ENCODE measurements at regions of chr3 and their contacts with region 1.

Region 1: GRCh38 chr3:44761424-44762169 is at the starts of genes KIAA1143 and KIF15:
- DNase-seq: peak; percentile 92 to 99 (median 98)
- ATAC-seq: peak; percentile 97
- H3K4me3 ChIP-seq: peak within 1 kb of the TSS; percentile 74 to 77
- H3K4me3 Mint-ChIP-seq: peak within 1 kb of the TSS; percentile 93
- H3K27ac ChIP-seq: peak within 1 kb of the TSS; percentile 78 to 81
- H3K27ac Mint-ChIP-seq: peak within 1 kb of the TSS; percentile 92
- H3K4me1 ChIP-seq: peaks cover 9% of the 10 kb centered on the region
- H3K4me1 Mint-ChIP-seq: peaks cover 40% of the 10 kb centered on the region
- H3K27me3 ChIP-seq: no peaks in the 10 kb centered on the region
- H3K27me3 Mint-ChIP-seq: peaks cover 3% of the 10 kb centered on the region
- CTCF ChIP-seq: no peak
- total RNA-seq, gene KIAA1143: 29.7 to 30.3 TPM
- total RNA-seq, gene KIF15: 0.24 to 0.64 TPM

Region 2: DNA sequence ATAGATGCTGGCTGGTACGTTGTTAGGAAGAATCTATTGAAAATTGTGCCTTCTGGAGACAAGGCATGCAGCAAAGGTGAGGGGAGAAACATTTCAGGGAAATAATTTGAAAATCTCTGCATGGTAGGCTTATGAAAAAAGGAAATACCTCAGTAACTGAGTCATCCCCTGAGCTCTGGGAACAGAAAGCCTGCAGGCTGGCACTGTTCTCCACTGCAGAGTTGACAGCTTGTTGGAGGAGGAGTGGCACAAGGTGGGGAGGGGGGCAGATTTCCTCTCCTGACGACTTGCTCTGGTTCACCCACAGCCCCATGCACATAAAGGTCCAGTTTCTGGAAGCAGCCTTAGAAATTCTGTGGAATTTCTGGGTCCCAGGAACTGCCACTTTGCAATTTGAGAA is 891.5 kb before region 1 on chr3:
- CTCF ChIA-PET with region 1: no interaction called
- POLR2A ChIA-PET with region 1: no interaction called
- intact Hi-C with region 1: no loop called
- DNase-seq: no peak
- ATAC-seq: no peak
- H3K4me3 ChIP-seq: no peak overlapping the region
- H3K4me3 Mint-ChIP-seq: no peak overlapping the region
- H3K27ac ChIP-seq: no peak overlapping the region
- H3K27ac Mint-ChIP-seq: no peak overlapping the region
- H3K4me1 ChIP-seq: no peaks in the 10 kb centered on the region
- H3K4me1 Mint-ChIP-seq: no peaks in the 10 kb centered on the region
- H3K27me3 ChIP-seq: no peaks in the 10 kb centered on the region
- H3K27me3 Mint-ChIP-seq: peaks cover 25% of the 10 kb centered on the region
- CTCF ChIP-seq: no peak

Region 3: DNA sequence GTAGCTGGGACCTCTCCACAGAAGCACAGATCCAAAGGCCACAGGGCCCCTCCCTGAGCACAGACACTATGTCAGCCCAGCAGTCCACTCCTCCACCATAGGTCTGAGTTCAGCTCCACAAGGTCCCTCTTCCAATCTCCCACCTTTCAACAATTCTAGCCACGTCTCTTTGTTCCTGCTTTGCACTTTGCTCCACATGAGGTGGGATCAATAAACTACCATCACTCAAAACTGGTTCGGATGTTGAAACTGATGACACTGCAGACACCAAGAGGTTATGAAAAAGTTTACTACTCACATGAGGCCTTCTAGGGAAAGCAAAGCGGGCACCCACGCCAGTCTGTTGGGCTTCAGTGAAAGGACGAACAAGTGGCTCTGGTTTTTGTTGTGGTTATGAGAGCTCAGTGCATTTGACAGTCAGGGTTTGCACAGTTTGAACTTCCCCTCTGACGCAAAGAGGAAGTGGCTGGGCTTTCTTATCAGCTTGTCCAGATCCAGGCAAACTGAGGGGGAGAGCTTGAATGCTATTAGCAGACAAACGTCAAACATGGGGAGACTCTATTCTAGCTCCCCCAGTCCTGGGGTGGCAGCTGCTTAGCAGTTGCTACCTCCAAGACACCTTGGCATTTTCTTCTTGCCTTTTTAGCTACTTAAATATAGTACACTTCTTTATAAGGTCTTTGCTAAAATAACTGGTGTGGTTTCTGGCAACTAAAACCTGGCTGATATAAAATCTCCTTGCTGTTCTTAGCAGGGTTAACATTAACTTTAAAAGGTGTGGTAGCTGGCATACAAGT is 321.9 kb before region 1 on chr3:
- CTCF ChIA-PET with region 1: no interaction called
- POLR2A ChIA-PET with region 1: no interaction called
- intact Hi-C with region 1: loop called in 1 of 2 experiments (anchors 1 kb)
- DNase-seq: peak; percentile 24 to 91 (median 58)
- ATAC-seq: peak; percentile 86
- H3K4me3 ChIP-seq: peak overlapping the region in 1 of 2 experiments; percentile 33
- H3K4me3 Mint-ChIP-seq: peak overlapping the region; percentile 68
- H3K27ac ChIP-seq: peak overlapping the region; percentile 45 to 84
- H3K27ac Mint-ChIP-seq: peak overlapping the region; percentile 92
- H3K4me1 ChIP-seq: peaks cover 19% of the 10 kb centered on the region
- H3K4me1 Mint-ChIP-seq: peaks cover 31% of the 10 kb centered on the region
- H3K27me3 ChIP-seq: no peaks in the 10 kb centered on the region
- H3K27me3 Mint-ChIP-seq: no peaks in the 10 kb centered on the region
- CTCF ChIP-seq: no peak

Region 4: DNA sequence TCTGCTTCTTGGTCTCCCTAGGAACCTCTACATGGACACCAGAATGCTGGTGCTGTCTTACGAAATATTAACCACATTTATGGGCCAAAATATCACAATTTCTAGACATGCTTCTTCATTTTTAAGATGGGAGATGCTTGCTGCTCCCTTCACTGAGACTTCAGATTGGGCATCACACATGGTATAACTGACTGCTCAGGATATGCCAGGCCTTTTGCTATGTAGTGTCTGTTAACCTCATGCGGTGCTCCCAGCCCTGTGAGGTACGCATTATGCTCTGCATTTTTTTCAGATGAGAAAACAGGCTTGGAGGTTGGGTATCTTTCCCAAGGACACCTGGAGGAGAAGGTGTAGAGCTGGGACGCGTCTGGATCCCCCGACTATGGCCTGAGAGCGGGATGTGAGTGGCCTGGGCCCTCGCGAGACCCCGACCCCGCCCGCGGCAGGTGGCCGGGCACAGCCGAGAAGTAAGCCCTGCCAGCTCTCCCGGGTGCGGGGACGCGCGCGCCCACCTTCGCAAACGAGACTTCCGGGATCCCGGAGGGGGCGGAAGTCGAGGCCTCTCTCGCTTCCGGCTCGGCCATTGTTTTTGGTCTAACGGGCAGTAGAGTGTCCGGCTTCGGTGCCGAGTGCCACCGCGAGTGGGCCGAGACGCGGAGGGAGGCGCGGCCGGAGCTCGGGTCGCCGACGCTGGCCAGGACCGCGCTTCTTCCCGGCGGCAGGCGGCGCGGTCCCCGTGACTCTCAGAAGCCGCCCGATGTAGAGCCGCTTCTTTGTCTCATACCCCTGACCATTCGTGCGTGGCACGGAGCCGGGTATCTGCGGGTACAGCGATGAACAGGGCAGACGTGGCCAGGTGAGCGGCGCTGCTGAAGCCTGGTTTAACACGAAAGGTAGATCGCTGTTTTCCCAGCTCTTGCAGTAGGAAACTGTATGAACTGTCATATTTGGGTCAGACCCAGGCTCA is 206.7 kb before region 1 on chr3 and contains the start of gene ZKSCAN7:
- CTCF ChIA-PET with region 1: no interaction called
- POLR2A ChIA-PET with region 1: no interaction called
- intact Hi-C with region 1: loop called in 1 of 2 experiments (anchors 2 kb)
- DNase-seq: peak; percentile 20 to 79 (median 51)
- ATAC-seq: peak; percentile 74
- H3K4me3 ChIP-seq: peak within 1 kb of the TSS; percentile 76 to 88
- H3K4me3 Mint-ChIP-seq: peak within 1 kb of the TSS; percentile 93
- H3K27ac ChIP-seq: peak within 1 kb of the TSS; percentile 58 to 74
- H3K27ac Mint-ChIP-seq: peak within 1 kb of the TSS; percentile 92
- H3K4me1 ChIP-seq: peaks cover 9% of the 10 kb centered on the region
- H3K4me1 Mint-ChIP-seq: peaks cover 30% of the 10 kb centered on the region
- H3K27me3 ChIP-seq: no peaks in the 10 kb centered on the region
- H3K27me3 Mint-ChIP-seq: peaks cover 9% of the 10 kb centered on the region
- CTCF ChIP-seq: no peak
- total RNA-seq, gene ZKSCAN7: 0.68 to 1.6 TPM

Region 5: DNA sequence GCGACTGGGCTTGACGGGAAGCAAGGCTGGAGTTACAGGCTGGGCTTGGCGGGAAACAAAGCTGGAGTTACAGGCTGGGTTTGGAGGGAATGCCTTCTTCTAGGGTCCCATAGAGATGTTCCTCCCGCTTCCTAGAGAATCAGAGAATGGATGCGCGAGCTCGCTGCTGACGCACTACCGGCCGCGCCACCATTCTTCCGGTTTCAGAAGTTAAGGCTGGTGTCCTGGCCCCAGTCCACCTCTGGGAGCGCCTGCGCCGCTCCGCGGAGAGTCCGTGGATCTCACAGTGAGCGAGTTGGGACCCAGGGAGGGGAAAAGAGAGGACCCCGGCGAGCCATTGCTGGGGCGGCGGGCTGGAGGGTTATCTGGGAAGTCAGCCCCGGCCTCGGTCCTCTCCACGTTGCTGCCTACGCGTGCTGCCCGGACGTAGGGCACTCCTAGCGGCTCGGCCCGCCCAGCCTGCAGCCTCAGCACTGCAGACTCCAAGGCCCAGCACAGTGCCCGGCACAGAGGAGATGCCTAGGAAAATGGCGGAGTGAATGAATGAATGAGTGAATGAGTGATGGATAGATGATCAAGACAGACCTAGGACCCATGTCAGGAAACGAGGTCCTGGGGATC is 49.0 kb before region 1 on chr3 and contains the start of gene ZNF502:
- CTCF ChIA-PET with region 1: interaction called, 3 read pairs
- POLR2A ChIA-PET with region 1: interaction called, 8 read pairs
- intact Hi-C with region 1: loop called (anchors 1 to 5 kb)
- DNase-seq: peak; percentile 6 to 80 (median 70)
- ATAC-seq: peak; percentile 90
- H3K4me3 ChIP-seq: peak within 1 kb of the TSS; percentile 59 to 77
- H3K4me3 Mint-ChIP-seq: peak within 1 kb of the TSS; percentile 93
- H3K27ac ChIP-seq: peak within 1 kb of the TSS; percentile 32 to 66
- H3K27ac Mint-ChIP-seq: peak within 1 kb of the TSS; percentile 90
- H3K4me1 ChIP-seq: no peaks in the 10 kb centered on the region
- H3K4me1 Mint-ChIP-seq: peaks cover 18% of the 10 kb centered on the region
- H3K27me3 ChIP-seq: peaks cover 0 to 2% of the 10 kb centered on the region in 2 experiments
- H3K27me3 Mint-ChIP-seq: peaks cover 25% of the 10 kb centered on the region
- CTCF ChIP-seq: peak; percentile 26
- total RNA-seq, gene ZNF502: 5.8 to 6.3 TPM

Region 6: GRCh38 chr3:44825264-44825925 is 63.8 kb after region 1 on chr3:
- CTCF ChIA-PET with region 1: no interaction called
- POLR2A ChIA-PET with region 1: no interaction called
- intact Hi-C with region 1: no loop called
- DNase-seq: no peak
- ATAC-seq: no peak
- H3K4me3 ChIP-seq: no peak overlapping the region
- H3K4me3 Mint-ChIP-seq: no peak overlapping the region
- H3K27ac ChIP-seq: no peak overlapping the region
- H3K27ac Mint-ChIP-seq: no peak overlapping the region
- H3K4me1 ChIP-seq: no peaks in the 10 kb centered on the region
- H3K4me1 Mint-ChIP-seq: no peaks in the 10 kb centered on the region
- H3K27me3 ChIP-seq: no peaks in the 10 kb centered on the region
- H3K27me3 Mint-ChIP-seq: no peaks in the 10 kb centered on the region
- CTCF ChIP-seq: no peak

Region 7: DNA sequence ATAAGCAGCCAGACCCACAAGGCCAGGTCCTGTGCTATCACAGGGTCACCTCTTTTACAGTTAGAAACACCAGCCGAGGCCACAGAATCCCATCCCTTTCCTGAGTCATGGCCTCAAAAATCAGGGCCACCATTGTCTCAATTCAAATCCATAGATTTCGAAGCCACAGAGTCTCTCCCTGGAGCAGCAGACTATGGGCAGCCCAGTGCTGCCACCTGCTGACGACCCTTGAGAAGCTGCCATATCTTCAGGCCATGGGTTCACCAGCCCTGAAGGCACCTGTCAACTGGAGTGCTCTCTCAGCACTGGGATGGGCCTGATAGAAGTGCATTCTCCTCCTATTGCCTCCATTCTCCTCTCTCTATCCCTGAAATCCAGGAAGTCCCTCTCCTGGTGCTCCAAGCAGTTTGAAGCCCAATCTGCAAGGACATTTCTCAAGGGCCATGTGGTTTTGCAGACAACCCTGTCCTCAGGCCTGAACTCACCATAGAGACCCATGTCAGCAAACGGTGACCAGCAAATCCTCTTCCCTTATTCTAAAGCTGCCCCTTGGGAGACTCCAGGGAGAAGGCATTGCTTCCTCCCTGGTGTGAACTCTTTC is 152.4 kb after region 1 on chr3:
- CTCF ChIA-PET with region 1: no interaction called
- POLR2A ChIA-PET with region 1: interaction called, 3 read pairs
- intact Hi-C with region 1: loop called in 1 of 2 experiments (anchors 1 kb)
- DNase-seq: peak; percentile 22 to 77 (median 66)
- ATAC-seq: peak; percentile 72
- H3K4me3 ChIP-seq: no peak overlapping the region
- H3K4me3 Mint-ChIP-seq: no peak overlapping the region
- H3K27ac ChIP-seq: no peak overlapping the region
- H3K27ac Mint-ChIP-seq: no peak overlapping the region
- H3K4me1 ChIP-seq: no peaks in the 10 kb centered on the region
- H3K4me1 Mint-ChIP-seq: no peaks in the 10 kb centered on the region
- H3K27me3 ChIP-seq: no peaks in the 10 kb centered on the region
- H3K27me3 Mint-ChIP-seq: peaks cover 10% of the 10 kb centered on the region
- CTCF ChIP-seq: peak; percentile 73

Region 8: DNA sequence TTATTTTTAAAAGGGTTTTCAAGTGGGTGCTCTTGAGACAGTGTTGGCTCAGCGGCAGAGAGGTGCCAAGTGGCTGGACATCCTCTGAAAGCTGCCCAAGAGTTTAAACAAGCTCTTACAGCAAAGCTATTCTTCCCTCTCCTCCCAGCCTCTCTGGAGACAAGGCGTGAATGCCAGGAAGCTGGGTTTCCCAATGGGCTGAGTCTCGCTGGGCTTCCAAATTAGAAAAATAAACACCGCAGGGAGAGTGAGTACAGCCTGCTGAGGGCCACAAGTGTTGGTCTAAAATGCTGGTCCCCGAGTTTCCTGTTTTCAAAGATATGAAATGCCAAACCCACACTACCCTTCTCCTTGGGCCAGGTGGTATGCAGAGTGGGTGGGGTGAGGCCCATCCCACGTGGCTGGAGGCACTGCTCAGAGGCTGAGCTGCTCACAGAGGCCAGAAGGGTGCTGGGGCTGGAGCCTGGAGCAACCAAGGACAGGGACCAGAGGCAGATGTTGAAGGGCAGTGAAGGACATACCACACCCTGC is 178.0 kb after region 1 on chr3:
- CTCF ChIA-PET with region 1: no interaction called
- POLR2A ChIA-PET with region 1: no interaction called
- intact Hi-C with region 1: no loop called
- DNase-seq: no peak
- ATAC-seq: no peak
- H3K4me3 ChIP-seq: no peak overlapping the region
- H3K4me3 Mint-ChIP-seq: no peak overlapping the region
- H3K27ac ChIP-seq: no peak overlapping the region
- H3K27ac Mint-ChIP-seq: no peak overlapping the region
- H3K4me1 ChIP-seq: no peaks in the 10 kb centered on the region
- H3K4me1 Mint-ChIP-seq: peaks cover 6% of the 10 kb centered on the region
- H3K27me3 ChIP-seq: no peaks in the 10 kb centered on the region
- H3K27me3 Mint-ChIP-seq: no peaks in the 10 kb centered on the region
- CTCF ChIP-seq: no peak